Esophagus muscularis mucosa (tissue), 4 donors: ENCODE measurements at regions of chr10 and their contacts with region 1.

Region 1: DNA sequence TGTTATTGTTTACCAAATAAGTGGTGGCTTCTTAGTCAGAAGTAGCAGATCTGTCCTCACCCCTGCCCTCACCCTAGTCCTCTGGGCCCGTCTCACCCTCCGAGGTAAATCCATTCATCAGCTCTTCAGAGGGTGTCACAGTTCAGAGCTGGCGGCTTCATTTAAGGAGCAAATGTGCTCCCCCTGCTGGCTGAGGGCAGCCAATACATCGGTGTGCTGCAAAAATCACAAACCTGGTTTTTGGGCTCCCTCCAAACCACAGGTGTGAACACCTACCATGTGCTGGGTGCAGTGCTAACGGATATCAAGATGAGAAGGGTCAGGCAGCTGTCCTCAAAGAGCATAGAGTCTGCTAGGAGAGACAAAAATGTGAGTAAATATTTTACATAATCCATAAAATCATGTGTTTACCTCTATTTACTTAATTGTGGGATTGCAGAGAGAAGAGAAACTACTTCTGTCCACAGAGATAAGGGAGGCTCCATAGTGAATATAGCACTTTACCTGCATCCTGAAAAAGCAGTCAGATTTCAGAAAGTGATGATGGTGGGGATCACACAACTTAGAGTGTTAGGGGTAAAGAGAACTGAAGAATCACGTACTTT is 15.5 kb upstream of the CRTAC1 start:
- DNase-seq: no peak
- H3K4me3 ChIP-seq: no peak overlapping the region
- H3K27ac ChIP-seq: no peak overlapping the region
- H3K4me1 ChIP-seq: peaks cover 0 to 10% (median 0%) of the 10 kb centered on the region in 4 donors
- H3K27me3 ChIP-seq: peaks cover 0 to 50% (median 0%) of the 10 kb centered on the region in 4 donors
- CTCF ChIP-seq: peak; percentile 73 to 96 (median 80)
- EP300 ChIP-seq: no peak
- POLR2A ChIP-seq: no peak

Region 2: GRCh38 chr10:97792141-97792721 is 253.7 kb before region 1 on chr10:
- intact Hi-C with region 1: loop called (anchors 10 kb)
- DNase-seq: no peak
- H3K4me3 ChIP-seq: no peak overlapping the region
- H3K27ac ChIP-seq: no peak overlapping the region
- H3K4me1 ChIP-seq: peaks cover 0 to 12% (median 9%) of the 10 kb centered on the region in 4 donors
- H3K27me3 ChIP-seq: peaks cover 0 to 63% (median 0%) of the 10 kb centered on the region in 4 donors
- CTCF ChIP-seq: peak; percentile 70 to 94 (median 84)
- EP300 ChIP-seq: no peak
- POLR2A ChIP-seq: no peak

Region 3: GRCh38 chr10:97849687-97850402 is 196.0 kb before region 1 on chr10 and contains the start of gene GOLGA7B:
- intact Hi-C with region 1: no loop called
- DNase-seq: no peak
- H3K4me3 ChIP-seq: peak within 1 kb of the TSS; percentile 56 to 64 (median 62)
- H3K27ac ChIP-seq: no peak within 1 kb of the TSS
- H3K4me1 ChIP-seq: peaks cover 5 to 23% (median 15%) of the 10 kb centered on the region in 4 donors
- H3K27me3 ChIP-seq: peaks cover 0 to 76% (median 32%) of the 10 kb centered on the region in 4 donors
- CTCF ChIP-seq: no peak
- EP300 ChIP-seq: no peak
- POLR2A ChIP-seq: no peak
- total RNA-seq, gene GOLGA7B: under 0.01 to 0.33 (median 0.18) TPM

Region 4: DNA sequence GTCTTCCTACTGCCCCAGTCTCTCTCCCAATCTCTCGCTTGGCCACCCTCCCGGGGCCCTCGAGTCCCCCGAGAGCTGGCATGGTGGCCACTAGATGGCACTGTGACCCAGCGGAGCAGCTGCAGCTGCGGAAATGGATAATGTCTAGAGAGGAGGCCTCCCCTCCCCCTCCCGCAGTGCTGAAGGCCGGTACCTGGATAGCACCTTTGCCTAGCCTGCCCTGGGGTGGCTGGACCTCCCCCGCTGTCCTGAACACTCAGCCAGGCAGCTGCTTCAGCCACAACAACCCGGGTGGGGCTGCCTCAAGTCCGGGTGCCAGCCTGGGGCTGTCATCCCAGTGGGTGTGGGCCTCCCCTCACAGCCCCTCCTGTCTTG is 131.1 kb before region 1 on chr10:
- intact Hi-C with region 1: loop called (anchors 1 kb)
- DNase-seq: no peak
- H3K4me3 ChIP-seq: peak overlapping the region in 2 of 4 donors; percentile 10 to 28
- H3K27ac ChIP-seq: no peak overlapping the region
- H3K4me1 ChIP-seq: peaks cover 14 to 22% (median 19%) of the 10 kb centered on the region in 4 donors
- H3K27me3 ChIP-seq: peaks cover 0 to 48% (median 0%) of the 10 kb centered on the region in 4 donors
- CTCF ChIP-seq: peak; percentile 86 to 91 (median 91)
- EP300 ChIP-seq: no peak
- POLR2A ChIP-seq: no peak